ENCODE measurements at regions of chr10 and their contacts with region 1.

Region 1: DNA sequence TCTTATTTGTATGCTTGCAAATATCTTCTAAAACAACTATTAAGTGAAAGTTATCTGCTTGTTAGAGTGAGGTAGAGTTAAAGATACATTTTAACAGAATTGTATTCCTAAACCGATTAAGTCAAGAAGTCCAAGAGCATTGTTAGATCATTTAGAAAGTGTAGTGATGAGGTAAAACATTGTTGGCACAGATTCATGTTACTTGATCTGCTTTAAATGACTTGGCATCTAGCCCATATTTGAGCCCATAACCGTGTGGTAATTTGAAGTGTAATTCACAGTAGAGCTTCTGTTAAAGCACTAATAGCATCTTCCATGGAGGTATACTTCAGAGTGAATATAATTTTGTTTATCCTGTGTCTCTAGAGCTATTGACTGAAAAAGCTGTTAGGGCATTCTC is 62.1 kb downstream of the PTEN start:
- DNase-seq: no peak
- ATAC-seq: no peak
- H3K4me3 ChIP-seq: no peak overlapping the region
- H3K27ac ChIP-seq: no peak overlapping the region
- H3K4me1 ChIP-seq: peaks cover 4% of the 10 kb centered on the region; the same call in 1 of the 2 replicates
- H3K27me3 ChIP-seq: no peaks in the 10 kb centered on the region
- CTCF ChIP-seq: no peak

Region 2: GRCh38 chr10:87942884-87943527 is 17.4 kb after region 1 on chr10:
- CTCF ChIA-PET with region 1: no interaction called
- POLR2A ChIA-PET with region 1: no interaction called
- in situ Hi-C with region 1: no loop called
- intact Hi-C with region 1: no loop called
- DNase-seq: no peak
- ATAC-seq: no peak
- H3K4me3 ChIP-seq: no peak overlapping the region
- H3K27ac ChIP-seq: no peak overlapping the region
- H3K4me1 ChIP-seq: peaks cover 4% of the 10 kb centered on the region
- H3K27me3 ChIP-seq: no peaks in the 10 kb centered on the region
- CTCF ChIP-seq: no peak

Region 3: DNA sequence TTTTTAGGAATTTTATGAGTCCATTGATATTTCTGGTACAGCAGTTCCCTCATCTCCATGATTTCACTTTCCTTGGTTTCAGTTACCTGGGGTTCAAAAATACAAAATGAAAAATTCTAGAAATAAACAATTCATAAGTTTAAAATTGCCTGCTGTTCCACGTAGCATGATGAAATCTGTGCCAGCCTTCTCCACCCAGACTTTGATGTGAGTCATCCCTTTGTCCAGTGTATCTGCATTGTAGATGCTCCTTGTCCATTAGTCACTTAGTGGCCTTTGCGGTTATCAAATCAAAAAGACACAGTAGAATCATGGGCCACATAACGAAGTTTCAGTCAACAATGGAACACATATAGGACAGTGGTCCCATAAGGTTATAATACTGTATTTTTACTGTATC is 224.8 kb after region 1 on chr10:
- CTCF ChIA-PET with region 1: interaction called, 14 read pairs
- POLR2A ChIA-PET with region 1: no interaction called
- in situ Hi-C with region 1: no loop called
- intact Hi-C with region 1: no loop called
- DNase-seq: no peak
- ATAC-seq: no peak
- H3K4me3 ChIP-seq: no peak overlapping the region
- H3K27ac ChIP-seq: no peak overlapping the region
- H3K4me1 ChIP-seq: no peaks in the 10 kb centered on the region
- H3K27me3 ChIP-seq: no peaks in the 10 kb centered on the region
- CTCF ChIP-seq: no peak

Measured in Panc1 (cell line).